Mammary epithelial cell (primary cell): ENCODE measurements at regions of chr18 and their contacts with region 1.

Region 1: DNA sequence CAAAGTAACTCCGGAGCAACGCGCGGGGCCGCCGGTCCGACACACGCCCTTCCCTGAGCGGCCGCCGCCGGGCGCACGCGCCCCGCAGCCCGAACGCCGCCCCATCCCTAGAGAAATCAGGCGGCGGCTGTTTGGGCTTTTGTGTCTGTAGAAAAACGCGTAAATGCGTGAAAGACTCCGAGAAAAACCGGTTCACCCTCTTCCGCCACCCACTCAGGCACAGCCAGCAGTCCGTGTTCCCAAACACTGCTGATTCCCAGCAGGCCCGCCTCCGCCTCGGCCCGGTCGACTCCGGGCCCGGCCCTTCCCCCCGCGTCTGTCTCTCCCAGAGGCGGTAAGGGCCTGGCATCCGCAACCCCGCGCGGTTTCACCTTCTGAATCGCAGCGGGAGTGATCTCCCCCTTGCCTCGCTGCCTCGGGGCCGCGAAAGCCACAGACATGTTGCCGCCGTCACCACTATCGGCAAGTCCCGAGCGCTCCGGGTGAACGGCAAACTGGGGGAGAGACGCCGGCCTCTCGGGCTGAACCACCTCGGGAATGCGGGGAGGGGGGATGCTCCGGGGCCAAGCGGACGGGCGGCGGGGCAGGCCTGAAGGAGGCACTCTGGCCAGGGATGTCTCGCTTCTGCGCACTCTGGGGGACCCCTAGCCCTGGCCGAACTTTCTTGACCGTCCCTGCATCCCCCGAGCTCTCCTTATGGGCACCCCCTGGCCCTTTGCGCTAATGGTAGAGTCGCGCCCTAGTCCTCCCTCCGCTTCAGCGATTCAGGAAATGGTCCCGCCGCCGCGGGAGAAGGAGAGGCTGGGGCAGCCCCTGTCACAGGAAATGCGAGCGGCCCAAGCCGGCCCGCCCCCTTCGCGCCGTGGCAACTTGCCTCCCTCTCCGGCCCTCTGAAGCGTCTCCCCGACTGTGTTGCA is at the start of gene SS18:
- DNase-seq: peak; percentile 92
- H3K4me3 ChIP-seq: peak within 1 kb of the TSS; percentile 96 to 99 (median 98)
- H3K27ac ChIP-seq: peak within 1 kb of the TSS; percentile 84
- H3K4me1 ChIP-seq: peaks cover 18% of the 10 kb centered on the region
- H3K27me3 ChIP-seq: no peaks in the 10 kb centered on the region
- CTCF ChIP-seq: peak in 1 of 2 donors; percentile 8
- total RNA-seq, gene SS18: 99.7 to 137 TPM

Region 2: DNA sequence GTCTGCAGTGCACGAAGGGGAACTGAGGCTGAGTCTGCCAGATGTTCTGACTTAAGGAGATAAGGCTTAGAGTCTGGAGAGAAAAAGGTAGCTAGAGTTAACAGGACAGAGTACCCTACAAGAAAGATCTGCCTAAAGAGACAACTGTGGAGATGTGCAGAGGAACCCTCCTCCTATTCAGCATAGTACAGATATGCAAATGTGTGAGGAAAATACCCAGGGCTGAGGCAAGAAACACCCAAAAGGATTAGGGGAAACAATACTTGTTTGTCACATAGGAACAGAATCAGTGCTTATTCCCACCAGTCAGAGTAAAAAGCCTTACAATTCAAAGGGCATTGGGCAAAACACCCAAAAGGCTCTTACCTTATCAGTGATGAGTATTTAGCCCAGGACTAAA is 67.8 kb before region 1 on chr18:
- CTCF ChIA-PET with region 1: no interaction called
- dilution Hi-C with region 1: no loop called
- in situ Hi-C with region 1: no loop called
- intact Hi-C with region 1: loop called (anchors 5 kb)
- DNase-seq: no peak
- H3K4me3 ChIP-seq: no peak overlapping the region
- H3K27ac ChIP-seq: no peak overlapping the region
- H3K4me1 ChIP-seq: no peaks in the 10 kb centered on the region
- H3K27me3 ChIP-seq: no peaks in the 10 kb centered on the region
- CTCF ChIP-seq: no peak

Region 3: DNA sequence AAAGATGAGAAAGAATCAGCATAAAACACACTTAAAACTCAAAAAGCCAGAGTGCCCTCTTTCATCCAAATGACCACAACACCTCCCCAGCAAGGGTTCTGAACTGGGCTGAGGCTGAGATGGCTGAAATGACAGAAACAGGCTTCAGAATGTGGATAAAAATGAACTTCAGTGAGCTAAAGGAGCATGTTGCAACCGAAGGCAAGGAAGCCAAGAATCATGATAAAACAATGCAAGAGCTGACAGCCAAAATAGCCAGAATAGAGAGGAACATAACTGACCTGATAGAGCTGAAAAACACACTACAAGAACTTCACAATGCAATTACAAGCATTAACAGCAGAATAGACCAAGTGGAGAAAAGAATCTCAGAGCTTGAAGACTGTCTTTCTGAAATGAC is 31.1 kb after region 1 on chr18:
- CTCF ChIA-PET with region 1: no interaction called
- dilution Hi-C with region 1: no loop called
- in situ Hi-C with region 1: no loop called
- intact Hi-C with region 1: no loop called
- DNase-seq: no peak
- H3K4me3 ChIP-seq: no peak overlapping the region
- H3K27ac ChIP-seq: no peak overlapping the region
- H3K4me1 ChIP-seq: no peaks in the 10 kb centered on the region
- H3K27me3 ChIP-seq: no peaks in the 10 kb centered on the region
- CTCF ChIP-seq: no peak

Region 4: DNA sequence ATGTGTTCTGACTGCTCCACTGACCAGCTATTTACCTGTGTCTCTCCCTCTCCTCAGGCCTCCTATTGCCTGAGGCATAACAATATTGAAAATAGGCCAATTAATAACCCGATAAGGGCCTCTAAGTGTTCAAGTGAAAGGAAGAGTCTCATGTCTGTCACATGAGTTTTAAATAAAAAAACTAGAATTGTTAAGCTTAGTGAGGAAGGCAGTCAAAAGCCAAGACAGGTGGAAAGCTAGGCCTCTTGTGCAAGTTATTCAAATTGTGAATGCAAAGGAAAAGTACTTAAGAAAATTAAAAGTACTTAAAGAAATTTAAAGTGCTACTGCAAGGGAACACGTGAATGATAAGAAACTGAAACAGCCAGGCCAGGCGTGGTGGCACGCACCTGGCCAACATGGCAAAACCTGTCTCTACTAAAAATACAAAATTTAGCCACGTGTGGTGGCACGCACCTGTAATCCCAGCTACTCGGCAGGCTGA is 91.0 kb after region 1 on chr18:
- CTCF ChIA-PET with region 1: no interaction called
- dilution Hi-C with region 1: no loop called
- in situ Hi-C with region 1: no loop called
- intact Hi-C with region 1: no loop called
- DNase-seq: no peak
- H3K4me3 ChIP-seq: no peak overlapping the region
- H3K27ac ChIP-seq: no peak overlapping the region
- H3K4me1 ChIP-seq: no peaks in the 10 kb centered on the region
- H3K27me3 ChIP-seq: no peaks in the 10 kb centered on the region
- CTCF ChIP-seq: no peak

Region 5: GRCh38 chr18:26226229-26227005 is 136.0 kb after region 1 on chr18 and contains the start of gene TAF4B:
- CTCF ChIA-PET with region 1: no interaction called
- dilution Hi-C with region 1: no loop called
- in situ Hi-C with region 1: no loop called
- intact Hi-C with region 1: loop called (anchors 5 kb)
- DNase-seq: peak; percentile 92
- H3K4me3 ChIP-seq: peak within 1 kb of the TSS; percentile 55 to 96 (median 94)
- H3K27ac ChIP-seq: peak within 1 kb of the TSS; percentile 90
- H3K4me1 ChIP-seq: peaks cover 20% of the 10 kb centered on the region
- H3K27me3 ChIP-seq: no peaks in the 10 kb centered on the region
- CTCF ChIP-seq: no peak
- total RNA-seq, gene TAF4B: 5.7 to 6.5 TPM

Region 6: DNA sequence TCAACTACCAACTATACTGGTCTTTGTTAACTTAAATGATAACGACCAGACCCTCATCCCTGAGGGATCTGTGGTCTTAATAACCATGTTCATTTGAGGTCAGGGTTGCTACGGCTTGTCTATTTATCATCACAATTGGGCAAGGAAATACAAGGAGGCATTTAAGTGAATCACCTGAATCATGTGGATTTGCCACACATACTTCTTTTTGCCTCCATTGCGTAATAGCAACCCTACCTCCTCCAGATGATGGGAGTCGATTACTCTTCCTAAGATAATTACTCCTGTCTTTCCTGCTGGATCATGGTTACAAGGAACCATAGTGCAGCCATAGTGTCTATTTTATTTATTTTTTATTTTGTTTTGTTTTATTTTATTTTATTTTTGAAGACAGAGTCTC is 178.1 kb after region 1 on chr18:
- CTCF ChIA-PET with region 1: no interaction called
- dilution Hi-C with region 1: no loop called
- in situ Hi-C with region 1: no loop called
- intact Hi-C with region 1: no loop called
- DNase-seq: peak; percentile 80
- H3K4me3 ChIP-seq: no peak overlapping the region
- H3K27ac ChIP-seq: no peak overlapping the region
- H3K4me1 ChIP-seq: no peaks in the 10 kb centered on the region
- H3K27me3 ChIP-seq: no peaks in the 10 kb centered on the region
- CTCF ChIP-seq: no peak